AG04449 (cell line): ENCODE measurements at regions of chr5 and their contacts with region 1.

Region 1: GRCh38 chr5:141512390-141512910 is 23.6 kb downstream of the PCDHGC5 start:
- DNase-seq: no peak
- H3K4me3 ChIP-seq: peak overlapping the region; percentile 52
- CTCF ChIP-seq: peak; percentile 80

Region 2: GRCh38 chr5:141430332-141431113 is 81.9 kb before region 1 on chr5 and contains the start of gene PCDHGA12:
- CTCF ChIA-PET with region 1: interaction called, 23 read pairs
- POLR2A ChIA-PET with region 1: interaction called, 4 read pairs
- DNase-seq: peak; percentile 52
- H3K4me3 ChIP-seq: peak within 1 kb of the TSS; percentile 49
- CTCF ChIP-seq: peak; percentile 38

Region 3: GRCh38 chr5:141492168-141492885 is 20.1 kb before region 1 on chr5:
- CTCF ChIA-PET with region 1: interaction called, 856 read pairs
- POLR2A ChIA-PET with region 1: interaction called, 17 read pairs
- DNase-seq: no peak
- H3K4me3 ChIP-seq: no peak overlapping the region
- CTCF ChIP-seq: no peak

Region 4: GRCh38 chr5:141524604-141525597 is 12.5 kb after region 1 on chr5:
- CTCF ChIA-PET with region 1: interaction called, 856 read pairs
- POLR2A ChIA-PET with region 1: interaction called, 33 read pairs
- DNase-seq: peak; percentile 76
- H3K4me3 ChIP-seq: peak overlapping the region; percentile 29
- CTCF ChIP-seq: peak; percentile 97